Heart left ventricle (tissue), 16 donors: ENCODE measurements at regions of chr9 and their contacts with region 1.

Region 1: DNA sequence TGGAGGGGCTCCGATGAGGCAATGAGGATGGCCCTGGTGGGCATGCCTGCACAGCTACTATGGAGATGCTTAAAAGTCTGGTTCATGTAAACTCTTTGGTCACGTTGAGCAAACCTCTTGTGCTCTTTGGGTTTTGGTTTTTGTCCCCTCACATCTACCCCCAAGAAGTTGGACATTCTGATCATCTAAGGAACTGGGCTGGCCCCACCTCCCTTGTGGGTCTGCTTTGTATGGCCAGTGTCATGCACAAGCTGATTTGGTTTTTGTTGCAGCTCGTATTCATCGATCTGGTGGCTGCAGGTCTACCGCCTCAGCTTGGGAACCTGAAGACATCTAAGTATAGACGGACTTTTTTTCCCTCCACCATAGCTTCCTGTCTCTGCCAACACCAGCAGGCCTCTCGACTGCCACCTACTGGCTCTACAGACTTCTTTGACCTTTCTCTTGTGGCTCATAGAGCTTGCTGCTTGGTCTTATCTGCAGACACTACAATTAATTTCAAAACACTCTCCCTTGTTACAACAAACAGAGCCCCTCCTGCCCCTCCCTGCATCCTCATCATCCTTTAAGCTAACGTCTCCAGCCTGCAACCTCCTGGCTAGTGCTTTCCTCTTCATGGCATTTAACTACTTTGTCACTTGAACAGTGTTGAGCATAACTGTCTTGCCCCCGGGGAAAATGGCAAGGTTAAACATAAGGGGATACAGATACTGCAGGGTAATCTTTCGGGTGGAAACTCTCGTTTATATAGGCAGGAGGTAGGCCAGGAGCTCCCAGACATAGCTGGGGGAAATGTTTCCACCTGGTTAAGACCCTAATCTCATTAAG is 34.5 kb downstream of the TSTD2 start:
- DNase-seq: peak in 4 of 5 donors; percentile 77 to 86 (median 79)
- ATAC-seq: peak; percentile 45 to 74 (median 66)
- H3K4me3 ChIP-seq: no peak overlapping the region
- H3K27ac ChIP-seq: peak overlapping the region in 6 of 12 donors; percentile 16 to 53 (median 25)
- H3K4me1 ChIP-seq: peaks cover 0 to 79% (median 29%) of the 10 kb centered on the region in 12 donors
- H3K27me3 ChIP-seq: no peaks in the 10 kb centered on the region
- CTCF ChIP-seq: peak; percentile 81 to 89 (median 86)
- POLR2A ChIP-seq: no peak

Region 2: GRCh38 chr9:96719921-96720320 is 878.8 kb before region 1 on chr9:
- intact Hi-C with region 1: no loop called
- DNase-seq: peak in 1 of 5 donors; percentile 33
- ATAC-seq: peak in 1 of 4 donors; percentile 20
- H3K4me3 ChIP-seq: peak overlapping the region in 11 of 12 donors; percentile 4 to 49 (median 36)
- H3K27ac ChIP-seq: no peak overlapping the region
- H3K4me1 ChIP-seq: peaks cover 0 to 16% (median 7%) of the 10 kb centered on the region in 12 donors
- H3K27me3 ChIP-seq: peaks cover 0 to 22% (median 6%) of the 10 kb centered on the region in 9 donors
- CTCF ChIP-seq: no peak
- POLR2A ChIP-seq: no peak

Region 3: GRCh38 chr9:97411789-97412625 is 186.7 kb before region 1 on chr9 and contains the start of gene TDRD7:
- intact Hi-C with region 1: loop called in 2 of 10 experiments (anchors 5 kb)
- DNase-seq: peak; percentile 87 to 96 (median 90)
- ATAC-seq: peak; percentile 68 to 97 (median 91)
- H3K4me3 ChIP-seq: peak within 1 kb of the TSS; percentile 64 to 100 (median 94)
- H3K27ac ChIP-seq: peak within 1 kb of the TSS; percentile 60 to 96 (median 88)
- H3K4me1 ChIP-seq: peaks cover 0 to 22% (median 11%) of the 10 kb centered on the region in 12 donors
- H3K27me3 ChIP-seq: no peaks in the 10 kb centered on the region
- CTCF ChIP-seq: peak; percentile 93 to 100 (median 99)
- POLR2A ChIP-seq: peak in 1 of 2 donors; percentile 30
- total RNA-seq, gene TDRD7: 4.9 to 15.3 (median 9.3) TPM

Region 4: GRCh38 chr9:97501177-97501971 is 97.3 kb before region 1 on chr9 and contains the start of gene TMOD1:
- intact Hi-C with region 1: loop called in 7 of 10 experiments (anchors 2 to 10 kb)
- DNase-seq: peak; percentile 78 to 90 (median 81)
- ATAC-seq: peak; percentile 52 to 84 (median 68)
- H3K4me3 ChIP-seq: peak within 1 kb of the TSS; percentile 62 to 96 (median 88)
- H3K27ac ChIP-seq: peak within 1 kb of the TSS; percentile 81 to 98 (median 93)
- H3K4me1 ChIP-seq: peaks cover 0 to 55% (median 26%) of the 10 kb centered on the region in 12 donors
- H3K27me3 ChIP-seq: peaks cover 0 to 43% (median 0%) of the 10 kb centered on the region in 9 donors
- CTCF ChIP-seq: peak in 8 of 12 donors; percentile 18 to 46 (median 29)
- POLR2A ChIP-seq: no peak
- total RNA-seq, gene TMOD1: 106 to 201 (median 176) TPM

Region 5: DNA sequence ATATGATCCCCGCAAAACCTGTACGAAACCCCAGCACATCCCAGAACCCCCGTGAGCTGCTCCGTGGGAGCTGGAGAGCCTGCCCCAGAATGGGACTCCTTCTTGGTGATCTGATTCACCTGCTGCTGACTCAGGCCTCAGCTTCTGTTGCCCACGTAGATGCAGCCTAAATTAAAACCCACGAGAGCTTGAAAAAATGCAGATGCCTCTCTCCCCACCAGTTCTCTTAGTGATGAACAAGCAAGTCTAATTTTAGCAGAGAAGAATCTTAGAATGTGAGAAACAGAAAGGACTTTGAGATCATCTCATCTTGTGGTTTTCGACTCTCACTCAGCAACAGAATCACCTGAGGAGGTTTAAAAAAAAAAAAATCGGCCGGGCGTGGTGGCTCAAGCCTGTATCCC is 39.6 kb before region 1 on chr9:
- intact Hi-C with region 1: loop called in 3 of 10 experiments (anchors 5 kb)
- DNase-seq: no peak
- ATAC-seq: no peak
- H3K4me3 ChIP-seq: no peak overlapping the region
- H3K27ac ChIP-seq: peak overlapping the region; percentile 77 to 96 (median 86)
- H3K4me1 ChIP-seq: peaks cover 3 to 86% (median 59%) of the 10 kb centered on the region in 12 donors
- H3K27me3 ChIP-seq: no peaks in the 10 kb centered on the region
- CTCF ChIP-seq: no peak
- POLR2A ChIP-seq: no peak

Region 6: GRCh38 chr9:97564291-97565175 is 34.1 kb before region 1 on chr9:
- intact Hi-C with region 1: loop called in 3 of 10 experiments (anchors 5 kb)
- DNase-seq: peak in 1 of 5 donors; percentile 38
- ATAC-seq: peak; percentile 45 to 72 (median 62)
- H3K4me3 ChIP-seq: no peak overlapping the region
- H3K27ac ChIP-seq: peak overlapping the region; percentile 0 to 73 (median 46)
- H3K4me1 ChIP-seq: peaks cover 4 to 54% (median 21%) of the 10 kb centered on the region in 12 donors
- H3K27me3 ChIP-seq: no peaks in the 10 kb centered on the region
- CTCF ChIP-seq: peak in 1 of 12 donors; percentile 11
- POLR2A ChIP-seq: no peak

Region 7: GRCh38 chr9:97773723-97774122 is 175.0 kb after region 1 on chr9:
- intact Hi-C with region 1: no loop called
- DNase-seq: peak in 2 of 5 donors; percentile 35 to 39
- ATAC-seq: peak in 3 of 4 donors; percentile 27 to 56 (median 50)
- H3K4me3 ChIP-seq: no peak overlapping the region
- H3K27ac ChIP-seq: no peak overlapping the region
- H3K4me1 ChIP-seq: peaks cover 0 to 4% (median 0%) of the 10 kb centered on the region in 12 donors
- H3K27me3 ChIP-seq: peaks cover 0 to 44% (median 1%) of the 10 kb centered on the region in 9 donors
- CTCF ChIP-seq: no peak
- POLR2A ChIP-seq: no peak